ENCODE measurements at regions of chr9 and their contacts with region 1.

Region 1: GRCh38 chr9:21455320-21455719 is 15.1 kb downstream of the IFNA1 start:
- DNase-seq: peak; percentile 28
- H3K4me3 Mint-ChIP-seq: no peak overlapping the region
- H3K27ac Mint-ChIP-seq: no peak overlapping the region
- H3K4me1 Mint-ChIP-seq: no peaks in the 10 kb centered on the region
- H3K27me3 Mint-ChIP-seq: no peaks in the 10 kb centered on the region
- CTCF ChIP-seq: peak; percentile 33

Region 2: DNA sequence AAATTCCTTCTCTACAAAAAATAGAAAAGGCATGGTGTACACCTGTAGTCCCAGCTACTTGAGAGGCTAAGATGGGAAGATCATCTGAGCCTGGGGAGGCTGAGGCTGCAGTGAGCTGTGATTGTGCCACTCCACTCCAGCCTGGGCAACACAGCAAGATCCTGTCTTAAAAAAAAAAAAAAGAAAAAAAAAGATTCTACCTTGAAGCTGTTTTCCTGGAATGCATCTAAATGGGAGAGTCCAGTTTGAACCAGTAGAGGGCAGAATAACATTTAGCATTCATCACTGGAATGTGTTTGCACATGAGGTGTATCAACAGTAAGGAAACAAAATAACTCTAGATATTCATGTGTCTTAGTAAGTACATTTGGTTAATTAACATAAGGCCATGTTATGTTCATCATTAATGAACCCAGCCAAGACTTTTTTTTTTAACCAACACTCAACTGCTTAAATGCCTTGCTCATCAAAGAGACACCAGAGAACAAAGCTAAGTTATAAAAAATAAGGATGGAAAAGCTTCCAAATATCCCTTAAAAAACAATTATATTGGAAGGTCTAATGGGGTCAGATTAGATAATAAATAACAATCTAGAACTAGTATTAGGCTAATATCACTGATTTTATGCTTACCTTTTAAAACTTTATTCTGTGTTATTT is 10.7 kb after region 1 on chr9:
- CTCF ChIA-PET with region 1: interaction called, 11 read pairs
- POLR2A ChIA-PET with region 1: no interaction called
- intact Hi-C with region 1: no loop called
- DNase-seq: peak; percentile 47
- H3K4me3 Mint-ChIP-seq: no peak overlapping the region
- H3K27ac Mint-ChIP-seq: no peak overlapping the region
- H3K4me1 Mint-ChIP-seq: no peaks in the 10 kb centered on the region
- H3K27me3 Mint-ChIP-seq: no peaks in the 10 kb centered on the region
- CTCF ChIP-seq: peak; percentile 38

Measured in MCF 10A (cell line).